Stomach (tissue), 19 donors: ENCODE measurements at regions of chr2 and their contacts with region 1.

Region 1: DNA sequence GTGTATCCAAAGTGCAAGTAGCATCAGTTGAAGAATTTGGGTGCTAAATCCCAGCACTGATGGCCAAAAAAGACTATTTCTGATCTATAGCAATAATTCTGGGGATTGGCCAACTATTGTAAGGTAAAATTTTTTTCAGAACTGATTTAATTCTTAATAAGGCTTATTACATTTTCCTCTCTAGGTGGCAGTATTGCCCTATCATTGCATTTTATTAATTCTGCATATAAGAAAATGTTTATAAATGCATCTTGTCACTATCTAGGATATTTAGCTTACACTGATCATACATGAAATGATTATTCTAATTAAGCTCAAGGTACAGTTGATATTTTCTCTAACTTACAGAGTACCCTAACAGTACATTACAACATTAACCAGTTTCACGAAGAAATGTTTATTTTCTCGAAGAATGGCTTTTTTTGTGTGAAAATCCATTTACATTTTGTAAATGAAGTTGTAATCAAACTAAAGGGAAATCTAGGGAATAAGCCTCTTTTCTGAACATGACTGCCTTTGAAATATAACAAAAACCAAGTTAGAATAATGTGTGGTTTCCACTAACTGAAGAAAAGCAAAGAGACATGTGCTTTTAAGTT is 11.0 kb downstream of the TTN start:
- DNase-seq: peak in 1 of 2 donors; percentile 69
- H3K4me3 ChIP-seq: no peak overlapping the region
- H3K27ac ChIP-seq: no peak overlapping the region
- H3K4me1 ChIP-seq: no peaks in the 10 kb centered on the region
- H3K27me3 ChIP-seq: no peaks in the 10 kb centered on the region
- CTCF ChIP-seq: peak in 5 of 7 experiments; percentile 20 to 63 (median 53)
- EP300 ChIP-seq: no peak
- POLR2A ChIP-seq: no peak

Region 2: GRCh38 chr2:178914259-178914849 is 118.2 kb after region 1 on chr2:
- intact Hi-C with region 1: loop called (anchors 10 kb)
- DNase-seq: peak; percentile 84 to 93
- H3K4me3 ChIP-seq: no peak overlapping the region
- H3K27ac ChIP-seq: no peak overlapping the region
- H3K4me1 ChIP-seq: peaks cover 0 to 8% (median 3%) of the 10 kb centered on the region in 4 donors
- H3K27me3 ChIP-seq: no peaks in the 10 kb centered on the region
- CTCF ChIP-seq: peak in 5 of 7 experiments; percentile 66 to 81 (median 70)
- EP300 ChIP-seq: no peak
- POLR2A ChIP-seq: no peak